Psoas muscle (tissue), 8 donors: ENCODE measurements at regions of chr1 and their contacts with region 1.

Region 1: DNA sequence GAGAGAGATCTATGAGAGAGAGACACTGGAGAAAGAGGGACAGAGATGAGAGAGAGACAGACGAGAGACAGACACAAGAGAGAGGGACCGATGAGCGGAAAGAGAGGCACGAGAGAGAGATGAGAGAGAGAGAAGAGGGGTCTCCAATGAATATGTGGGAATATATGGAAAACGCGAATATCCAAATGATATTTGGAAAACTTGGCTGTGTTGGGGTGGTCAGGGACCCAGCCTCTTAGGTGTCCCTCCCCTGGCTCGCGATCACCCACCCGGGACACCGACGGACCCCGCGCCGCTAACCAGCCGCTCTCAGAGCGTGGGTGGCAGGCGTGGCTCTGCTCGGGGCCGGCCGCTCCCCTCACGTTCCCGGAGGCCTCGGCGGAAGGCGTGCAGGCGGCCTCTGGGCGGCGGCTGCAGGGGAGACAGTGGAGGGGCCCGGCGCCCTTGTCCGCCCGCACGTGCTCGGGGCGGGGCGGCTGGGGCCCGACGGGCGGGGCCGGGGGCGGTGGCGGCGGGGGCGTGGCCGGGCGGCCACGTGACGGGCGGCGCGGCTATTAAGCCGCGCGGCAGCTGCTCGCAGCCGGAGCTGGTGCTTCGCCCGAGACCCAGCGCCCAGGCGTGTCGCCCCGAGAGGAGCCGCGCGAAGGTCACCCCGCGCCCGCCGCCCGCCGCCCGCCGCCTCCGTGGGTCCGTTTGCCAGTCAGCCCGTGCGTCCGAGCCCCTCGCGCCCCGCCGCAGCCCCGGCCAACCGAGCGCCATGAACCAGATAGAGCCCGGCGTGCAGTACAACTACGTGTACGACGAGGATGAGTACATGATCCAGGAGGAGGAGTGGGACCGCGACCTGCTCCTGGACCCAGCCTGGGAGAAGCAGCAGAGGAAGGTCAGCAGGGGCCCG is at the start of gene ACTN2:
- DNase-seq: peak; percentile 71 to 91
- ATAC-seq: peak; percentile 51 to 69 (median 62)
- H3K4me3 ChIP-seq: peak within 1 kb of the TSS; percentile 91
- H3K27ac ChIP-seq: peak within 1 kb of the TSS; percentile 99
- H3K4me1 ChIP-seq: no peaks in the 10 kb centered on the region
- H3K27me3 ChIP-seq: no peaks in the 10 kb centered on the region
- CTCF ChIP-seq: no peak
- total RNA-seq, gene ACTN2: 2,645 to 4,645 (median 3,147) TPM

Region 2: GRCh38 chr1:236292425-236292824 is 393.7 kb before region 1 on chr1:
- intact Hi-C with region 1: no loop called
- DNase-seq: no peak
- ATAC-seq: no peak
- H3K4me3 ChIP-seq: no peak overlapping the region
- H3K27ac ChIP-seq: no peak overlapping the region
- H3K4me1 ChIP-seq: no peaks in the 10 kb centered on the region
- H3K27me3 ChIP-seq: peaks cover 0 to 34% (median 5%) of the 10 kb centered on the region in 3 donors
- CTCF ChIP-seq: no peak

Region 3: GRCh38 chr1:236623371-236624166 is 62.6 kb before region 1 on chr1:
- intact Hi-C with region 1: loop called in 1 of 2 experiments (anchors 2 kb)
- DNase-seq: no peak
- ATAC-seq: peak in 3 of 4 donors; percentile 25 to 53 (median 53)
- H3K4me3 ChIP-seq: no peak overlapping the region
- H3K27ac ChIP-seq: peak overlapping the region; percentile 75
- H3K4me1 ChIP-seq: peaks cover 22% of the 10 kb centered on the region
- H3K27me3 ChIP-seq: no peaks in the 10 kb centered on the region
- CTCF ChIP-seq: no peak

Region 4: DNA sequence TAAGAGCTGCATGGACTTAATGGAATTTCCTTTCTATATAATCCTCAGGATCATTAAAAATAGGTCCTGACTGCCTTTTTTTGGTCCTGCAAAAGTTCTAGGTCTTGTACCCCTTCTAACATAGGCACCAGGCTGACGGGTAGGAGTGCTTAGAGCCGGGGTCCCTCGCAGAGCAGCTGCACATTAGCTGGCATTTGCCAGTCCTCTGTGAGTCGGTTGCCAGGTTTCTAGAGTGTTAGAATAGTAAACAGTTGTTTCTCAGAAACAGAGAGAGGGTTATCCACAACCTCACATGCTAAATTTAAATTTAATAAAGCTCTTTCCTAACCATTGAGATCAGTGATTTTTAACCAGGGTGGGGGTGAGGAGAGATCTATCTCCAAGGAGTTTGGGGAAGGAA is 46.5 kb before region 1 on chr1:
- intact Hi-C with region 1: loop called (anchors 5 kb)
- DNase-seq: no peak
- ATAC-seq: peak in 3 of 4 donors; percentile 66 to 69 (median 67)
- H3K4me3 ChIP-seq: peak overlapping the region; percentile 58
- H3K27ac ChIP-seq: peak overlapping the region; percentile 73
- H3K4me1 ChIP-seq: peaks cover 11% of the 10 kb centered on the region
- H3K27me3 ChIP-seq: no peaks in the 10 kb centered on the region
- CTCF ChIP-seq: no peak

Region 5: DNA sequence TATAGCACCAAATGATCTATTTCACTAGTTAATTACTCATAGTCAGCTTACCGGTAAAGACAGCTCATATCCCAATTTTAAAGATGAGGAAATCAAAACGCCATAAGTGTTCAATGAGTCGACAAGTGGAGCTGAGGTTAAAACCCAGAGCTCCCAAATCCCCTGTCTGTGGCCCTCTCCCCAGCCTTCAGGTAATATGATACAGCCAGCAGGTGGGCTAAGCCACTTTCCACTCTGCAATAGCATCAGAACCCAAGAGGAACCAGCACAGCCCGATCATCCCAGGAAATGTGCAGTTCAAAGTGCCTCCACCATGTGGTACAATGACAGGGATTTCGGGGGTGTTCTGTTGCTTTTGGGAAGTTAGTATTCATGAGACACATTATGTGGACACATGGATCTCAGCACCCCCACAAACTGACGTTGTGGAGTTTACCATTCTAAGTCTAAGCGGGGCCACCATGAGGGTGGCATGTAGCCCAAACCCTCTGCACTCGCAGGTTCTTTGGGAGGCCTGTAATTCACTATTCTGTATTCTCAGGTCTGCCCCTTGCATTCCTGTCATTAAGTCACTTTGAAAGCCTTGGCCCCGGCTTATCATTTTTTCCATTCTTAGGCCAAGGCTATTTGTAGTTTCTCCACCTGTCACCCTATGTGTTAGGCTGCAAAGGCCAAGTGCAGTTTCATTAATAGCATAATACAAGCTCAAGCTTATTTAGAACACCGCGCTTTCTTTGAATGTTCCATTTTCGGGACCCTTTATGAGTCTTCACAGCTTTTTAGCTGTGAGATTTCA is 26.2 kb before region 1 on chr1:
- intact Hi-C with region 1: loop called in 1 of 2 experiments (anchors 2 kb)
- DNase-seq: no peak
- ATAC-seq: peak; percentile 61 to 80 (median 72)
- H3K4me3 ChIP-seq: no peak overlapping the region
- H3K27ac ChIP-seq: peak overlapping the region; percentile 85
- H3K4me1 ChIP-seq: peaks cover 16% of the 10 kb centered on the region
- H3K27me3 ChIP-seq: no peaks in the 10 kb centered on the region
- CTCF ChIP-seq: no peak

Region 6: DNA sequence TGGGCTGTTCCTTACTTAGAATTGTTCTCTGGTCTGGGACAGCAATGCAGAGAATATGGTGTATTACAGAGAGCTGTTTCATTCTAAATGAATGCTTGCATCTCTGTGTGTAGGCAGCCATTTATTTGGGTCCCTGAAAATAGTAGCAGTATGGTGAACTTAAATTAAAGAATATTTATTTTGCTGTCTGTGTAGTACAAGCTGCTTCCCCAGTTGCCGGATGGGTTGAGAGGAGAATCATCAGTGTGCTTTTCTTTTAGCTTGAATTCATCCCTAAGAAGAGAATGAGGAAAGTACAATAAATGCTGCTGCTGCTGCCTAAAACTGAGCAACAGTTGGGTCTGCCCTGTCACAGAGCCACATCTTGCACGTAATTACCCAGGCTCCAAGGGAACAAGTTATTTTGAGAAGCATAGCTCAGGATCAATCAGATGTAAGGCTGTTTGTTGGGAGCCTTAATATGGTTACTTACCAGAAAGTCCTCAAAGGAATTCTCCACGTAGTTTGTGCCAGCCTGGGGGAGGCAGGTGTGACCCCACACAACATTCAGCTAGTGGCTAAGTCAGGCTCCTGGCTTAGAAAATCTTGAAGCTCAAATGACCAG is 16.7 kb after region 1 on chr1:
- intact Hi-C with region 1: loop called in 1 of 2 experiments (anchors 2 kb)
- DNase-seq: no peak
- ATAC-seq: peak; percentile 10 to 53 (median 44)
- H3K4me3 ChIP-seq: peak overlapping the region; percentile 37
- H3K27ac ChIP-seq: peak overlapping the region; percentile 99
- H3K4me1 ChIP-seq: peaks cover 79% of the 10 kb centered on the region
- H3K27me3 ChIP-seq: no peaks in the 10 kb centered on the region
- CTCF ChIP-seq: no peak